ENCODE measurements at regions of chr10 and their contacts with region 1.

Region 1: GRCh38 chr10:3873728-3874461 is 88.9 kb upstream of the KLF6 start:
- DNase-seq: no peak
- H3K4me3 Mint-ChIP-seq: peak overlapping the region; percentile 62
- H3K27ac Mint-ChIP-seq: peak overlapping the region; percentile 97
- H3K4me1 Mint-ChIP-seq: peaks cover 69% of the 10 kb centered on the region
- H3K27me3 Mint-ChIP-seq: no peaks in the 10 kb centered on the region

Region 2: GRCh38 chr10:3226960-3227744 is 646.7 kb before region 1 on chr10:
- intact Hi-C with region 1: loop called (anchors 5 kb)
- DNase-seq: no peak
- H3K4me3 Mint-ChIP-seq: no peak overlapping the region
- H3K27ac Mint-ChIP-seq: no peak overlapping the region
- H3K4me1 Mint-ChIP-seq: peaks cover 18% of the 10 kb centered on the region
- H3K27me3 Mint-ChIP-seq: peaks cover 18% of the 10 kb centered on the region

Region 3: DNA sequence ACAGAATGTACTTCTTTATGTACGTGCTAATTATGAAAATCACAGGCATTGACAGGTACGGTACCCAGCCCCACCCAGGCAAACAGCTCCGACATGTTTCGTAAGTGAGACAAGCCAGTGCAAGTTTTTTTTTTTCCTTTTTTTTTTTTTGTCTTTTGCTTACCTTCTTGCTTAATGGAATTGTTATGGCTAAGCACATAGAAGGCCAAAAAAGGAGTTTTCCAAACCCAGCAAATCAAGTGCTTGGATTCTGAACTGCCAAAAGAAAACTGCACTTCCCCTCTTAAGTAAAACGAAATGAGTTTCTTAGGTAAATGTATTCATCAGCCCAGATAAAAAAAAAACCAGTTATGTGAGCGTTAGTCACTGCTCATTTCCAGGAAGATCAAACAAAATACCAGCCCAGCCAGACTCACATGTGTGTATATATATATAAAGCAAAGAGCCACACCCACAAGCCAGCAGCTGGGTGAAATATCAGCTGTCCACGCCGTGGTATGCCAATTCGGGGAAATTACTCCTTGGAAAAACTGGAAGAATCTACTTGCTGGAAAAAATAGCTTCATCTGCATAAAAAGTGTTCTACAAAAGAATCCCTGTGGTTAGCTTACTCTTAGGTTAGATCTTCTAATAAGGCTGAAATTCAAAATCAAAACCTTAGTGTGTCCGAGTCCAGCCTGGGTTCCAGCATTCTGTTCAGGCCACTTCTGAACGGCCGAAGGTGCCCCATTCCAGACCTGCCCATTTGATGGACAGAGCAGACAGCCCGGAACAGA is 96.9 kb before region 1 on chr10:
- intact Hi-C with region 1: no loop called
- DNase-seq: peak; percentile 60
- H3K4me3 Mint-ChIP-seq: peak overlapping the region; percentile 37
- H3K27ac Mint-ChIP-seq: peak overlapping the region; percentile 53
- H3K4me1 Mint-ChIP-seq: peaks cover 81% of the 10 kb centered on the region
- H3K27me3 Mint-ChIP-seq: no peaks in the 10 kb centered on the region

Region 4: DNA sequence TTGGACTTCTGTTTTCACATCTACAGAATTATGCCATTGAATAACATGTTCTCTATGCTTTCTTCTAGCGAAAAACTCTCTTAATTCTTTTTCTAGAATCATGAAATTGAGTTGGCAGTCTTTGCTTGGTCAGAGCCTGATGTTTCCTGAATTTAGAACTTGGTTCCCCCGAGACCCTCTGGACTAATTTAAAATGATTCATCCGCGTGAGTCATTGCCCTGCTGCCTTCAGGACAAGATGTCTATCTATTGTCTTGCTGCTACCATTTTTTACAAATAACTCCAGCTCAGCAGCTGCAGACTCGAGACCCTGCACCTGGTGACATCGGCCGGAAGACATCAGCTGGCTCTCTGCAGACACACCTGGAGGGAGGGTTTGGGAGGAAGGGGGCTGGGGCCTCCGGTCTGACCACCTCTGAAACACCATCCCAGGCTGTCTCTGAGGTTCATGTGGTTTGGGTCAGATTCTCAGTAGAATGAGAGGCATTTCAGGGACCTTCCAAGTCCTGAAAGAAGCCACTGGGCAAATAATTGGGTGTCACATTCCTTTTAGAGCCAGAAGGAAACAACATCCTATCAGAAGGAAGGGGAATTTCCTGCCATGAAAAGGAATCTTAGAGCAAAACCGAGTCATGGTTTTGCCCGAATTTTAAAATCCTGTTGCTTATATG is 68.0 kb before region 1 on chr10:
- intact Hi-C with region 1: loop called (anchors 1 kb)
- DNase-seq: no peak
- H3K4me3 Mint-ChIP-seq: peak overlapping the region; percentile 70
- H3K27ac Mint-ChIP-seq: peak overlapping the region; percentile 99
- H3K4me1 Mint-ChIP-seq: peaks cover 76% of the 10 kb centered on the region
- H3K27me3 Mint-ChIP-seq: no peaks in the 10 kb centered on the region

Region 5: GRCh38 chr10:3852147-3852904 is 21.6 kb before region 1 on chr10:
- intact Hi-C with region 1: loop called (anchors 1 kb)
- DNase-seq: peak; percentile 58
- H3K4me3 Mint-ChIP-seq: peak overlapping the region; percentile 52
- H3K27ac Mint-ChIP-seq: peak overlapping the region; percentile 92
- H3K4me1 Mint-ChIP-seq: peaks cover 37% of the 10 kb centered on the region
- H3K27me3 Mint-ChIP-seq: no peaks in the 10 kb centered on the region

Region 6: DNA sequence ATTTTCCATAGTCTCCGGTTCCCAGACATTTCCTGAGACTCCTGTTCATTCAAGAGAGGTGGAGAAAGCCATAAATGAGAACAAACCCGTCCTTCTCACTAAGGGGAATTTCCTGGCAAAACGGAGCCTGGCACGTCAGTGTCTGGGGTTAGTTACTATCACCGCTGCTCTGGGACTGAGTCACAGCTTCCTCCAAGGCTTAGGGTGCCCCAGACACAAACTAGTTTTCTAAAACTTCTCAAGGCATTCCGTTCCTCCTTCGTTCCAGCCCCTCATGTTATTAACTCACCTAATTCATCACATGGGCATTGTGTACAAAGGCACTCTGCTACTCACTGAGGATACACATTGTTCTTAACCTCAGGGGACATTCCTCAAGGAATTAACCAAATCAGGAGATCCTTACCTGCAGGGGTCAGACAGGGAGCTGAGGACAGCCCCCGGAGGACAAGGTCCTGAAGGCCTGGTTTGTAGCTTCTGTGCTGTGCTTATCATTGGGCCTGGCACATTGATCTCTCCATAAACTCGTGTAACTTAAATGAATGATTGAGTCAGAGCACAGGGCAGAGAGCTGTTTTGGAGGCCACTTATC is 14.1 kb after region 1 on chr10:
- intact Hi-C with region 1: loop called (anchors 1 kb)
- DNase-seq: peak; percentile 48
- H3K4me3 Mint-ChIP-seq: peak overlapping the region; percentile 20
- H3K27ac Mint-ChIP-seq: peak overlapping the region; percentile 76
- H3K4me1 Mint-ChIP-seq: peaks cover 38% of the 10 kb centered on the region
- H3K27me3 Mint-ChIP-seq: no peaks in the 10 kb centered on the region

Region 7: GRCh38 chr10:3902054-3902808 is 28.3 kb after region 1 on chr10:
- intact Hi-C with region 1: loop called (anchors 2 kb)
- DNase-seq: peak; percentile 47
- H3K4me3 Mint-ChIP-seq: peak overlapping the region; percentile 22
- H3K27ac Mint-ChIP-seq: peak overlapping the region; percentile 93
- H3K4me1 Mint-ChIP-seq: peaks cover 38% of the 10 kb centered on the region
- H3K27me3 Mint-ChIP-seq: no peaks in the 10 kb centered on the region

Region 8: GRCh38 chr10:3948843-3949242 is 74.9 kb after region 1 on chr10:
- intact Hi-C with region 1: loop called (anchors 2 kb)
- DNase-seq: peak; percentile 66
- H3K4me3 Mint-ChIP-seq: peak overlapping the region; percentile 8
- H3K27ac Mint-ChIP-seq: peak overlapping the region; percentile 55
- H3K4me1 Mint-ChIP-seq: peaks cover 50% of the 10 kb centered on the region
- H3K27me3 Mint-ChIP-seq: no peaks in the 10 kb centered on the region

Region 9: GRCh38 chr10:3961082-3961481 is 87.2 kb after region 1 on chr10:
- intact Hi-C with region 1: no loop called
- DNase-seq: peak; percentile 52
- H3K4me3 Mint-ChIP-seq: no peak overlapping the region
- H3K27ac Mint-ChIP-seq: peak overlapping the region; percentile 56
- H3K4me1 Mint-ChIP-seq: peaks cover 39% of the 10 kb centered on the region
- H3K27me3 Mint-ChIP-seq: no peaks in the 10 kb centered on the region